A673 (cell line): ENCODE measurements at regions of chr10 and their contacts with region 1.

Region 1: DNA sequence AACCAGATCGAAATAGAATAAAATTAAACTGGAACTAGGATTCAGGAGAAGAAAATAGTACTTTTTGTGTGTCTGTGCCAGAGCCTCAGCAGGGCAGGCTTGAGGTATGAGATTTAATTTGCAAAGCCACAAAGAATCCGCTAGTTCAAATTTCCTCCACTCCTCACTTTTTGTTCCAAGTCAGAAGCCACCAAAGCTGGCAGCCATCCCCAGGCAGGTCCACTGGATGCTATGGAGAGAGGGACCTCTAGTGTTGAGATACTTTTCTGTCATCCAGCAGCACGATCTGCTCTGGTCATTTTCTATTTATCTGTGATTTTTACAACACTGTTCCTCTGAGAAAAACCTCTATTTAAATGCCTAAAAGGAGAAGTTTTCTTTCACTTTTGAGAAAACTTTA is 147.9 kb upstream of the FRMD4A start:
- DNase-seq: peak; percentile 87
- H3K4me3 ChIP-seq: no peak overlapping the region
- H3K27ac ChIP-seq: no peak overlapping the region
- H3K4me1 ChIP-seq: peaks cover 4% of the 10 kb centered on the region
- H3K27me3 ChIP-seq: no peaks in the 10 kb centered on the region
- CTCF ChIP-seq: peak; percentile 83

Region 2: DNA sequence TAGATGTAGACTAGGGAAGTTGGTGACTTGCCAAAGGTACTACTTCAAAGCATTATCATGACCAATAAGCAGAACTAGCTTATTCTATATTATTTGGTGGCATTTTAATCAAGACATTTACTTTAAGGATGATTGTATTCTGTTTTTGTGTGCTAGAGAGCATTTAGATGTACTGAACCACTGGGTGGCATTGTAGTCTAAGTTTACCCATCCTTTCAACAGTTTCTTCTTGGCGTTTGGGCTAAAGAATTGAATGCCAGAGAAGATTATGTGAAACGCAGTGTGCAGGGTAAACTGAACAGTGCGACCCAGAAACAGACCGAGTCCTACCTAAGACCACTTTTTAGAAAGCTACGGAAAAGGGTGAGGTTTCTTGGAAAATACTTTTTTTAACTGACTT is 865.1 kb before region 1 on chr10:
- CTCF ChIA-PET with region 1: no interaction called
- POLR2A ChIA-PET with region 1: no interaction called
- intact Hi-C with region 1: loop called (anchors 10 kb)
- DNase-seq: peak; percentile 63
- H3K4me3 ChIP-seq: no peak overlapping the region
- H3K27ac ChIP-seq: no peak overlapping the region
- H3K4me1 ChIP-seq: peaks cover 40% of the 10 kb centered on the region
- H3K27me3 ChIP-seq: no peaks in the 10 kb centered on the region
- CTCF ChIP-seq: peak; percentile 56

Region 3: DNA sequence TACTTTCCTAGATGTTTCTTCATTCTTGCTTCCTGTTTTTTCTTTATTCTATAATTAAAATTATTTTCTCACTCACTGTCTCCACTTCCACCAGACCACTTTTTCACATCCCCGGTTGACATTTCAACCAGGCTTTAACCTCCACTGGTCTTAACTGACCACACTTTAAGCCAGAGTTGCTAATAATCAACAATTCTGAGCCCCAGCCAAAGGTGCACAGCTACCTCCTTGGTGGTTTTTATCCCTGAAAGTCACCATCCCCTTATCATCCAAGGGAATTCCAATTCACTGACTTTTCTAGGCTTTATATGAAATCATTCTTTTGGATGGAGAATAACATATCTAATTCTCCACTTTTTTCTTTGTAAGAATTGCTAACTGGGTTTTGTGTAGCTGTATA is 286.7 kb before region 1 on chr10:
- CTCF ChIA-PET with region 1: interaction called, 17 read pairs
- POLR2A ChIA-PET with region 1: no interaction called
- intact Hi-C with region 1: loop called (anchors 1 kb)
- DNase-seq: no peak
- H3K4me3 ChIP-seq: no peak overlapping the region
- H3K27ac ChIP-seq: no peak overlapping the region
- H3K4me1 ChIP-seq: no peaks in the 10 kb centered on the region
- H3K27me3 ChIP-seq: peaks cover 8% of the 10 kb centered on the region
- CTCF ChIP-seq: no peak

Region 4: DNA sequence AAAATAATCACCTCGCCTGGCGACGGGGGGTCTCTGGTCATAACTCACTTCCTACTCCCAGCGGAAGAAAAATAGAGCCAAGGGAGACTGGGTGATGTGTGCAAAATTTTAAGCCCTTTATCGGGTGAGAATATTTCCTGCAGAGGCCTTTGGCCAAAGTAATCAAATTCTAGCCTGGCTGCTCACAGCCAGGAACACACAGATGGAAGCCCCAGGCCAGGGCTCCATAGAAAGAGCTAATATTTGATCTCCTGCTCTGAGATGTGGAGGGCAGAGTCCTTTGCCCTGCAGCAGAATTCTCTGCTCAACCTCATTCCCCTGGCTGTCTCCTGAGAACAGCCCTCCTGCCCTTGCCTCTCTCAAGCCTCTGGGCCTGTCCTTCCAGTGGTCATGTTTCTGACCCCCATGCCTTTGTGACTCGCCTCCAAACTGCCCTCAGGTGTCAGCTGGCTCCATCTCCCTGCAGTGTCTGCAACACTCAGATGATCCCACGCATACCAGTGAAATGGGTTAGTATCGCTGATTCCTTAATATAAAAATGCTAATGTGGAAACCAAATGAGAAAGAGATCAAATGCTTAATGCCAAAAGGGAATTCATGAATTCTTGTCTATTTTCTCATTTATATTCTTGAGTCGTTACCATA is 182.4 kb before region 1 on chr10:
- CTCF ChIA-PET with region 1: no interaction called
- POLR2A ChIA-PET with region 1: no interaction called
- intact Hi-C with region 1: loop called (anchors 5 kb)
- DNase-seq: peak; percentile 6
- H3K4me3 ChIP-seq: no peak overlapping the region
- H3K27ac ChIP-seq: no peak overlapping the region
- H3K4me1 ChIP-seq: no peaks in the 10 kb centered on the region
- H3K27me3 ChIP-seq: peaks cover 32% of the 10 kb centered on the region
- CTCF ChIP-seq: no peak

Region 5: DNA sequence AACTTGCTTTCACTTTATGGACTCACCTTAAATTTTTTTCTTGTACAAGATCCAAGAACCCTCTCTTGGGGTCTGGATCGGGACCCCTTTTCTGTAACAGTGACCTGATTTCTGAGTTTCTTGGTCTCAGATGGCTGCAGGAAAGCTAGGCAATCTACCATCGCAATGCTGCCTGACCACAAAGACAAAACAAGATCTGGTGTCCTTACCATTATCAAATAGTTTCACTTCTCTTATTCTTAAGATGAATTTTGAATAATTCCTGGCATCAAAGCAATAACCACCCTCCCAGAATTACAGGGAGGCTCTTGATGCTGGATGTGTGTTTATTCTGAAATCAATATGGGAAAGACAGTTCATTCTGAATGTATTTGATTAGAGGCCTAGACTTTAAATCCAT is 70.5 kb before region 1 on chr10:
- CTCF ChIA-PET with region 1: interaction called, 13 read pairs
- POLR2A ChIA-PET with region 1: no interaction called
- intact Hi-C with region 1: no loop called
- DNase-seq: no peak
- H3K4me3 ChIP-seq: no peak overlapping the region
- H3K27ac ChIP-seq: no peak overlapping the region
- H3K4me1 ChIP-seq: peaks cover 40% of the 10 kb centered on the region
- H3K27me3 ChIP-seq: no peaks in the 10 kb centered on the region
- CTCF ChIP-seq: no peak